Activated T-helper 2 cell treated with anti-CD3 and anti-CD28 coated beads, Interferon-gamma antibody, Interleukin-2, Interleukin-4, amounts not matched to agents 10 μg/mL and 5 μg/mL and 100 μg/mL, durations not matched to agents 14 hours and 24 hours and 36 hours (primary cell): ENCODE measurements at regions of chr2 and their contacts with region 1.

Region 1: DNA sequence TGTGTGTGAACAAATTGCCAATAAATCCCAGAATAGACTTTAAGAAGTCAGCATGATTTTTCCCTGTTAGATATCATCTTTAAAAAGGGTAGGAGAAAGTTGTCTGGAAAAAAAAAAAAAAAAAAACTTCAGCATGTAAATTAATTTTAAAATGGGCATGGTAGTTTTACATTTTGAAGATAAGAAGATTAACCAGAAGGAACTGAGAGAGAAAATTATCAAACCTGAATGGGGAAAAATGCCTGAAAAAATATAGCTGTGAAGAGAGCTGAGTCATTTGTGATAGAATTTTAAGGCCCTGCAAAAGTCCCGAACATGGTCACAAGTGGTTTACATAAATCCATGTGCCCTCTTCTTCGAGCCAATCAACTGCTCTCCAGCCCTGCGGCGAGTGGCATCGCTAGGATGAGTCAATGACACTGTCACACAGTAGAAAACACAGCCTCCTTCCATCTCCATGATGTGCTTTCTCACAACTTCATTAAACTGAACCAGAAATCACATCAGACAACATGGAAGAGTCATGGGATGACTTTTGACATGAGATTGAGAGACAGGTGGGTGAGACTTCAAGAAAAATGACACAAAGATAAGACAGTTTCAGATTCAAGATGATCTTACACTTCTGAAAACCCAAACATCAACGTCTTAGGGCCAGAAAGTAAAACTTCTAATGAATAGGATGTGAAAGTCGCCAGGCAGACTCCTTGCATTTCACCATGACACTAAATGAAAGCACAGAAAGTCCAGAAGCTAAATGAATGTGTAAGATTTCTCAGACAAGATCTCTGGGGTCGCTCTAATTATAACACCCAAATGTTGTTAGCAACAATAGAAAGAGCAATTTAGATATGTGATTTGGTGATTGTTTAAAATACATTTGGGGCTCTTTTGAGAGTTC is 273.0 kb upstream of the ID2 start:
- DNase-seq: peak; percentile 43
- H3K4me3 Mint-ChIP-seq: no peak overlapping the region
- H3K27ac Mint-ChIP-seq: peak overlapping the region; percentile 79
- H3K4me1 Mint-ChIP-seq: peaks cover 36% of the 10 kb centered on the region
- H3K27me3 Mint-ChIP-seq: peaks cover 24% of the 10 kb centered on the region

Region 2: GRCh38 chr2:7427293-7428060 is 981.3 kb before region 1 on chr2:
- intact Hi-C with region 1: loop called (anchors 5 kb)
- DNase-seq: no peak
- H3K4me3 Mint-ChIP-seq: peak overlapping the region; percentile 49
- H3K27ac Mint-ChIP-seq: peak overlapping the region; percentile 78
- H3K4me1 Mint-ChIP-seq: peaks cover 45% of the 10 kb centered on the region
- H3K27me3 Mint-ChIP-seq: no peaks in the 10 kb centered on the region

Region 3: GRCh38 chr2:7930800-7931635 is 477.8 kb before region 1 on chr2:
- intact Hi-C with region 1: loop called (anchors 2 kb)
- DNase-seq: no peak
- H3K4me3 Mint-ChIP-seq: peak overlapping the region; percentile 17
- H3K27ac Mint-ChIP-seq: peak overlapping the region; percentile 85
- H3K4me1 Mint-ChIP-seq: peaks cover 36% of the 10 kb centered on the region
- H3K27me3 Mint-ChIP-seq: no peaks in the 10 kb centered on the region

Region 4: DNA sequence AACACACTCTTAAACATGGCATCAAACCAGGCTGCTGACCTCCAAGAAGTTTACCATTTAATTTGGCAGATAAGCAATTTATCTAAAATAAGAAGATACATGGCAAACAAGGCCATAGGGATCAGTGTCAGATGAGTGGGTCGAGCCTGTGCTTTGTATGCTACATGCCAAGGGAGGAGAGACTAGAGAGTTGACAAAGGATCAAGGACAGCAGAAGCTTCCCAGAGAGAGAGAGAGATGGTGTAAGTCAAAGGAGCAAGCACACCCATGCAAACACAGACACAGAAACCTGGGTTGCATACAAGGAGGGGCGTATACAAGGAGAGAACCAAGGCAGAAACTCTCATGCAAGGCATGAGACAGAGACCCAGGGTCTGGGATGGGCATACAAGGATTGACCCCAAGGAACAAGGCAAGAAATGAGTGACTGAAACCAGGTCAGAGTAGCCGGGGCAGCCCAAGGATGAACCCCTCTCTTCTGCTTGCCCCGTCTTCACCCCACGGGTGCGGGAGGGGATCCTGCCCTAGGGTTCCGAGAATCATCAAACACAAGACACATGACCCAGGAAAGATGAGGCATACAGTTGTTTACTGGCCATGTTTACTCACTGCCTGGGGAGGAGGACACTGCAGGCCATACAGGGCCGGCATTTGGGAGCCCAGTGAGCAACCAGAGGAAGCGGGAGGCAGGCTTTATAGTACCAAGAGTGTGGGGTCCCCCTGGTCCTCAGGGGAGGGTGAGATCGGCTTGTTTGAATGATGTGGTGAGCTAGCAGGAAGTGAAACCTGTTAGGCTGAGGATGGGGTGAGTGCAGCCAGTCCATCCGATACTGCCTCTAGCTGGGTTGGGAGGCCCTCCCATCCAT is 256.2 kb before region 1 on chr2:
- intact Hi-C with region 1: loop called (anchors 10 kb)
- DNase-seq: no peak
- H3K4me3 Mint-ChIP-seq: no peak overlapping the region
- H3K27ac Mint-ChIP-seq: no peak overlapping the region
- H3K4me1 Mint-ChIP-seq: peaks cover 42% of the 10 kb centered on the region
- H3K27me3 Mint-ChIP-seq: no peaks in the 10 kb centered on the region

Region 5: GRCh38 chr2:8285081-8285480 is 123.7 kb before region 1 on chr2:
- intact Hi-C with region 1: no loop called
- DNase-seq: no peak
- H3K4me3 Mint-ChIP-seq: no peak overlapping the region
- H3K27ac Mint-ChIP-seq: no peak overlapping the region
- H3K4me1 Mint-ChIP-seq: peaks cover 26% of the 10 kb centered on the region
- H3K27me3 Mint-ChIP-seq: peaks cover 6% of the 10 kb centered on the region

Region 6: DNA sequence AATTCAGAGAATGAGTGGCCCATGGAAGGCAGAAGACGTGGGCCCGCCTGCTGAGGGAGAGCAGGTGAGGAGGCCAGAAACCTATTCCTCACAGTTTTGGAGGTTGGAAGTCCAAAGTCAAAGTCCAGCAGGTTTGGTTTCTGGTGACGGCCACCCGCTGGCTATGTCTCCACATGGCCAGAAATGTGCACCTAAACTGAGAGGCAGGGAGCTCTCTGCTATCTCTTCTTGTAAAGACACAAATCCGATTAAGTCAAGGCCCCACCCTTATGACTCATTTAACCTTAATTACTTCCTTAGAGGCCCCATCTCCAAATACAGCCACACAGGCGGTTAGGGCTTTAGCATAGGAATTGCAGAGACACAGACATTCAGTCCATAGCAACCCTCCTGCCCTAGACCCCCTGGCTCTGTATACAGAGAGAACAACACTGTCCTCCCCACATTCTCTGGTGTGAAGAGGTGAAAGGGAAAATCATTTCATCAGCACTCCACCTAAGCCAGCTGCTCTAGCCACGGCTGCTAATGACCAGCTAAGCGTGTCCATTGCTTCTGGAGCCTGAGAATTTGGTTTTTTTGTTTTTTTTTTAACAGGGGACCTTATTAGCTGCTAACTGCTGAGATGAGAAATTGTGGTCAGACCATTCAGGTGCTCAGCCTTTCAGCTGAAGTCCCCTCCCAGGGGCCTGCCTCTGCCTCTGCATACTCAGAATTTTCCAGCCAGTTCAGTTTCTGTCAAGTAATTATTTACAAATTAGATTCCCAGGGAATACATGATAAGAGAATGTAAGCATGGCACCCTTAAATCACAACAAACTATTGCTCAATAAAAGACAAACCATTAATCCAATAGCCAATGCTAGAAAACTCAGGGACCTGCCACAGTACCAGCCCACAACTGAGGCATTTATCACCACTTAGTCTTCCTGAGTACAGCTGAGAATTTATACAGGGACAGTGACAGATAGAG is 95.7 kb before region 1 on chr2:
- intact Hi-C with region 1: loop called (anchors 1 kb)
- DNase-seq: no peak
- H3K4me3 Mint-ChIP-seq: no peak overlapping the region
- H3K27ac Mint-ChIP-seq: no peak overlapping the region
- H3K4me1 Mint-ChIP-seq: peaks cover 60% of the 10 kb centered on the region
- H3K27me3 Mint-ChIP-seq: peaks cover 22% of the 10 kb centered on the region

Region 7: DNA sequence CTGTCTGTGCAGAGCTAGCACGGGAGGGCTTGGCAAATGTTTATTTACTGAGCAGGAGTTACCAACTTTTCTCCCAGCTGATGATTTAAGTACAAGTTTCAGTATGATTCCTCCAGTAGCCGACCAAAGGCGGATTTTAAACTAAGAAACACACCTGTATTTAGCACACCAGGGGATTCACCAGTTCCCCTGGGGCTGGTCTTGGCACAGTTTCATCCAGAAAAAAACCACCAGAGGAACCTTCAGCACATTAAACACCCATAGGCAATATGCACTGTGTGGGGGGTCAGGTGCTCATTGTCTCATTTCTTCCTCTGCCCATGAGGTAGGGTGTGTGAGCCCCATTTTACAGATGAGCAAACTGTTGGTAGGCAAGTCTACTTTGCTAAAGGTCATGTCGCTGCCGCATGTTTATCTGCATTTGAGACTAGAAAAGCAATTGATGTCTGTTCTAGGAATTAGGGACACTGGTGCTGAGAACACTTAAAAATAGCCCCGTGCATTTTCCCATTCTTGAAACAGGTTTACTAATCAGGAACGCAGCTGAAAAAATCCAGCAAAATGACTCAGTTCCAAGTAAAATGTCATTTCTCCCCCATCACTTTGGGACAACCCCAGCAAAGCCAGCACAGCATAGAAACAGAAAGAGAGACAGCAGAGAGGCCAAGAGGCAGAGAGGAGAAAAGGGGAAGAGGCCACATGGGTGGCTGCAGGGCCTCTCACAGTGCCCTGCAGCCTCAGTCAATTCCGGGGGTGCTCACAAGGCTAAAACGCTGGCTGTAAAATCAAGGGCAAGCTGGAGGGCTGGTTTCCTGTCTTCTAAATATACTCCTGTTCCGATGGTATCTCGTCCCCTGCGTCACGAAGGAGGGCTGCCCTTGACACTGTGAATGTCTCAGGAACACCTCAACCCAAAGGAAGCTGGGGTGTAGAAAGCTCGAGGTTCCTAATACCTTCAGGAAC is 106.3 kb after region 1 on chr2:
- intact Hi-C with region 1: loop called (anchors 1 kb)
- DNase-seq: peak; percentile 58
- H3K4me3 Mint-ChIP-seq: peak overlapping the region; percentile 45
- H3K27ac Mint-ChIP-seq: peak overlapping the region; percentile 97
- H3K4me1 Mint-ChIP-seq: peaks cover 60% of the 10 kb centered on the region
- H3K27me3 Mint-ChIP-seq: no peaks in the 10 kb centered on the region